Calu3 (cell line): ENCODE measurements at regions of chr15 and their contacts with region 1.

Region 1: GRCh38 chr15:72532991-72533601 is 59.0 kb downstream of the ARIH1 start:
- DNase-seq: peak; percentile 28
- H3K4me3 Mint-ChIP-seq: no peak overlapping the region
- H3K27ac Mint-ChIP-seq: no peak overlapping the region
- H3K4me1 Mint-ChIP-seq: no peaks in the 10 kb centered on the region
- H3K27me3 Mint-ChIP-seq: no peaks in the 10 kb centered on the region
- CTCF ChIP-seq: peak; percentile 50

Region 2: DNA sequence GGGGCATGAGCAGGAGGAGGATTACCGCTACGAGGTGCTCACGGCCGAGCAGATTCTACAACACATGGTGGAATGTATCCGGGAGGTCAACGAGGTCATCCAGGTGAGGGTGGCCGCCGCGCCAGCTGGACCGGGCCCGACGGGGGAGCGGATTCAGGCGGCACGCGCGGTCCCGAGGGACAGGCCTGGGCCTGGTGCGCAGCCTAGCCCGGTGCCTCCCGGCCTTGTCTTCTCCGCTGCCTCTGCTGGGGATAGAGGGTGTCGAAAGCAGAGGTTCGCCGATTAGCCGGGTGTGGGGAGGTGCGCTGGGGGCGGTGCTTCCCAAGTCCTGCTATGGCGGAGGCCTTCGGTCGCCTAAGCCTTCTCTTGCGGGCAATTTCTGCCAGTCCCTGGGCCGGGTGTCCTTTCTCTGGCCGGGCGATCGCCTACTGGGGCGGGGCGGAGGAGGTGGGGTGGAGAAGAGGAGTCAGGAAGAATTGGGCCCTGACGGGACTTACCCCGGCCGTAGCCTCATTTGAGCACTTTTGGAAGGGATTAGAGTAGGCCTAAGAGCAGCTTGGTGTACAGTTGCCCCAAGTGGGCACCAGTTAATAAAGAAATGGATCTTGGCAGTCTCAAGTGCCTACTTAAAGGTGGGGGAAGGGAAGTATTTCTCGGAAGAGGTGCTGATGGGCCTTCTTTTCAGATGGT is 58.0 kb before region 1 on chr15:
- CTCF ChIA-PET with region 1: no interaction called
- intact Hi-C with region 1: loop called (anchors 5 kb)
- DNase-seq: peak; percentile 80
- H3K4me3 Mint-ChIP-seq: peak overlapping the region; percentile 90
- H3K27ac Mint-ChIP-seq: peak overlapping the region; percentile 98
- H3K4me1 Mint-ChIP-seq: peaks cover 9% of the 10 kb centered on the region
- H3K27me3 Mint-ChIP-seq: no peaks in the 10 kb centered on the region
- CTCF ChIP-seq: no peak